CD8-positive, alpha-beta T cell (primary cell): ENCODE measurements at regions of chr2 and their contacts with region 1.

Region 1: GRCh38 chr2:85862426-85862825 is 26.4 kb downstream of the ST3GAL5 start:
- DNase-seq: peak in 7 of 9 experiments; percentile 16 to 89 (median 70)
- ATAC-seq: peak; percentile 89
- H3K4me3 ChIP-seq: no peak overlapping the region
- H3K4me3 Mint-ChIP-seq: no peak overlapping the region
- H3K27ac ChIP-seq: peak overlapping the region in 1 of 2 experiments; percentile 75
- H3K27ac Mint-ChIP-seq: peak overlapping the region; percentile 66
- H3K4me1 ChIP-seq: peaks cover 9% of the 10 kb centered on the region
- H3K4me1 Mint-ChIP-seq: peaks cover 55% of the 10 kb centered on the region
- H3K27me3 ChIP-seq: no peaks in the 10 kb centered on the region
- H3K27me3 Mint-ChIP-seq: no peaks in the 10 kb centered on the region
- CTCF ChIP-seq: no peak

Region 2: DNA sequence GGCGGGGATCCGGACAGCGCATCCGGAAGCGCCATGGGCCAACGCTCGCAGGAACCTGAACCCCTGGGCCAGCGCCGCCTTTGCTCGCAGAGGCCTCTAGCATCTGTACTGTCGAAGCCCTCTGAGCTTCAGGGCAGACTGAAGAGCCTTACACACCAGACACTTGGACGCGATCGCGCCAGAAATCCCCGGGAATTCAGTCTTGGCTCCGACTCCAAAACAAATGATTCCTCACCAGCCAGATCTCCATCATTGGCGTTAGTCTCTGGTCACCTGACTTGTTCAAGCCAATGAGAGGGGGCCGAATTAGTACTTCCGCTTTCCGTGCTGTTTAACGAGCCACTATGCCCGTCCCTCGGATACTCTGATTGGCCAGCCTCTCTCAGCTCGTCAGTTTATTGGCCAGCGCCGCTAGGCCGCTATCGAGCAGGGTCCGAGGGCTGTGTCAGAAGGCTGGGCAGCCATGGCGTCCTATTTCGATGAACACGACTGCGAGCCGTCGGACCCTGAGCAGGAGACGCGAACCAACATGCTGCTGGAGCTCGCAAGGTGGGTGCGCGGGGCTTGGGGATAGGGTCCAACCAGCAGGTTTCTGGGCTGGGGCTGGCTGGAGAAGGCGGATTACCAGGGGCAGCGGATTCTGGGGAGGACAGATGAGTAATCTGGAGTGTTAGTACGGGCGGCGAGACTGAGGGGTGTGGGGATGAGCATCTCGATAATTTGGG is 267.0 kb before region 1 on chr2 and contains the start of gene RNF181:
- CTCF ChIA-PET with region 1: no interaction called
- POLR2A ChIA-PET with region 1: no interaction called
- intact Hi-C with region 1: no loop called
- DNase-seq: peak; percentile 72 to 97 (median 89)
- ATAC-seq: peak; percentile 98
- H3K4me3 ChIP-seq: peak within 1 kb of the TSS; percentile 75 to 78
- H3K4me3 Mint-ChIP-seq: peak within 1 kb of the TSS; percentile 97
- H3K27ac ChIP-seq: peak within 1 kb of the TSS; percentile 73 to 77
- H3K27ac Mint-ChIP-seq: peak within 1 kb of the TSS; percentile 97
- H3K4me1 ChIP-seq: peaks cover 25% of the 10 kb centered on the region
- H3K4me1 Mint-ChIP-seq: peaks cover 35% of the 10 kb centered on the region
- H3K27me3 ChIP-seq: no peaks in the 10 kb centered on the region
- H3K27me3 Mint-ChIP-seq: no peaks in the 10 kb centered on the region
- CTCF ChIP-seq: no peak
- total RNA-seq, gene RNF181: 38.1 to 41.0 TPM

Region 3: DNA sequence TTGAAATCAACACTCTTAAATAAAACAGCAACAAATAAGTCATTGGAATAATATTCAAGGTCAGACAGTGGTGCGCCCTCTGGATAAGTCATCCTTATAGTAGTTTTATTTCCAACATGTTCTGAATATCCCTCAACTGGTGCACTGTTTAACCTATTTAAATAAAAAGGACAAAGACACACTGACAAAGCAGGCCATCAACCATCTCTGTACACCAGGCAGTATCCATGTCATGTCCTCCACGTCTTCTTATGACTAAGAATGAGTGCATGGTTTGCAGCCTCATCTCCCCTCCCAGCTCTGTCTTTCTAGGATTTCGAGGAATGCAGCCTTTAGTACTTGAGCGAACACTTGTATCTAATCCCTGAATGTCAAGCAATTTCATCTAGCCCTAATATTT is 16.0 kb before region 1 on chr2:
- CTCF ChIA-PET with region 1: no interaction called
- POLR2A ChIA-PET with region 1: no interaction called
- intact Hi-C with region 1: loop called in 1 of 2 experiments (anchors 2 kb)
- DNase-seq: no peak
- ATAC-seq: no peak
- H3K4me3 ChIP-seq: no peak overlapping the region
- H3K4me3 Mint-ChIP-seq: no peak overlapping the region
- H3K27ac ChIP-seq: no peak overlapping the region
- H3K27ac Mint-ChIP-seq: no peak overlapping the region
- H3K4me1 ChIP-seq: peaks cover 20% of the 10 kb centered on the region
- H3K4me1 Mint-ChIP-seq: peaks cover 30% of the 10 kb centered on the region
- H3K27me3 ChIP-seq: no peaks in the 10 kb centered on the region
- H3K27me3 Mint-ChIP-seq: no peaks in the 10 kb centered on the region
- CTCF ChIP-seq: no peak

Region 4: GRCh38 chr2:85872536-85873161 is 10.2 kb after region 1 on chr2:
- CTCF ChIA-PET with region 1: no interaction called
- POLR2A ChIA-PET with region 1: no interaction called
- intact Hi-C with region 1: no loop called
- DNase-seq: no peak
- ATAC-seq: no peak
- H3K4me3 ChIP-seq: no peak overlapping the region
- H3K4me3 Mint-ChIP-seq: no peak overlapping the region
- H3K27ac ChIP-seq: no peak overlapping the region
- H3K27ac Mint-ChIP-seq: peak overlapping the region; percentile 52
- H3K4me1 ChIP-seq: peaks cover 16% of the 10 kb centered on the region
- H3K4me1 Mint-ChIP-seq: peaks cover 65% of the 10 kb centered on the region
- H3K27me3 ChIP-seq: no peaks in the 10 kb centered on the region
- H3K27me3 Mint-ChIP-seq: no peaks in the 10 kb centered on the region
- CTCF ChIP-seq: no peak

Region 5: GRCh38 chr2:86584151-86584913 is 721.9 kb after region 1 on chr2:
- CTCF ChIA-PET with region 1: no interaction called
- POLR2A ChIA-PET with region 1: no interaction called
- intact Hi-C with region 1: no loop called
- DNase-seq: peak in 3 of 9 experiments; percentile 10 to 38 (median 18)
- ATAC-seq: peak; percentile 85
- H3K4me3 ChIP-seq: no peak overlapping the region
- H3K4me3 Mint-ChIP-seq: peak overlapping the region; percentile 38
- H3K27ac ChIP-seq: peak overlapping the region in 1 of 2 experiments; percentile 44
- H3K27ac Mint-ChIP-seq: peak overlapping the region; percentile 92
- H3K4me1 ChIP-seq: peaks cover 14% of the 10 kb centered on the region
- H3K4me1 Mint-ChIP-seq: peaks cover 18% of the 10 kb centered on the region
- H3K27me3 ChIP-seq: no peaks in the 10 kb centered on the region
- H3K27me3 Mint-ChIP-seq: no peaks in the 10 kb centered on the region
- CTCF ChIP-seq: no peak